ENCODE measurements at regions of chr21 and their contacts with region 1.

Region 1: GRCh38 chr21:37496972-37497371 is 130.4 kb downstream of the DYRK1A start:
- DNase-seq: no peak
- ATAC-seq: no peak
- H3K4me3 ChIP-seq: no peak overlapping the region
- H3K27ac ChIP-seq: peak overlapping the region; percentile 21 to 38 (median 32)
- H3K4me1 ChIP-seq: peaks cover 7 to 9% of the 10 kb centered on the region in 2 donors
- H3K27me3 ChIP-seq: no peaks in the 10 kb centered on the region
- CTCF ChIP-seq: peak in 3 of 5 experiments; percentile 22 to 47 (median 24)
- POLR2A ChIP-seq: no peak

Region 2: DNA sequence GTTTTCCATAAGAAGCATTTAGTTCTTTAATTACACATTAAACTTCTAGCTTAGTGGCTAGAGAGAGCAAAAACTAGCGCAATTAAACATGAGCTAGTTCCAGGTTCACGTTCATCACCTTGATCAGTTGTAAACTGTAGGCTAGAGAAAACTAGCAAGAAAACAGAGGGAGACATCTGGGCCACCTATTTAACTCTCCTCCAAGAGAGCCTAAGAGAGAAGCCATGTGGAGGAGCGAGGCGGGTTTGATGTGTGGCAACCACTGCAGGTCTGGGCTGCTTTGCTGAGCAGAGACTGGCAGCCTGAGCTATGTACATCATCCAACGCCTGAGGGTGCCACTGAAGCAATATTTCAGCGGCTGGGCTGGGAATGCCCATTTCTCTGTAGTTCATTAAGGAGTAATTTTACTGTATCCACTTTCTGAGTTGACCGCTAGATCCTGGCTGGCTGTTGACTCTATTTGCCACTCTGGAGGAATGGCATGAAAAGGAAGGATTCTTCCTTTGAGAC is 122.5 kb after region 1 on chr21:
- in situ Hi-C with region 1: no loop called
- intact Hi-C with region 1: no loop called
- DNase-seq: no peak
- ATAC-seq: no peak
- H3K4me3 ChIP-seq: no peak overlapping the region
- H3K27ac ChIP-seq: no peak overlapping the region
- H3K4me1 ChIP-seq: peaks cover 12 to 32% of the 10 kb centered on the region in 2 donors
- H3K27me3 ChIP-seq: no peaks in the 10 kb centered on the region
- CTCF ChIP-seq: no peak
- POLR2A ChIP-seq: no peak

Region 3: GRCh38 chr21:37642493-37642892 is 145.5 kb after region 1 on chr21:
- in situ Hi-C with region 1: no loop called
- intact Hi-C with region 1: loop called (anchors 5 kb)
- DNase-seq: no peak
- ATAC-seq: peak; percentile 65 to 86
- H3K4me3 ChIP-seq: no peak overlapping the region
- H3K27ac ChIP-seq: no peak overlapping the region
- H3K4me1 ChIP-seq: peaks cover 0 to 2% of the 10 kb centered on the region in 2 donors
- H3K27me3 ChIP-seq: peaks cover 0 to 6% (median 0%) of the 10 kb centered on the region in 3 donors
- CTCF ChIP-seq: peak in 4 of 5 experiments; percentile 17 to 45 (median 32)
- POLR2A ChIP-seq: no peak

Measured in gastrocnemius medialis (tissue), 4 donors.